Calu3 (cell line): ENCODE measurements at regions of chr1 and their contacts with region 1.

Region 1: GRCh38 chr1:172449585-172450534 is 6.0 kb upstream of the PIGC start:
- DNase-seq: peak; percentile 75
- H3K4me3 Mint-ChIP-seq: peak overlapping the region; percentile 51
- H3K27ac Mint-ChIP-seq: peak overlapping the region; percentile 63
- H3K4me1 Mint-ChIP-seq: peaks cover 72% of the 10 kb centered on the region
- H3K27me3 Mint-ChIP-seq: no peaks in the 10 kb centered on the region
- CTCF ChIP-seq: peak; percentile 93

Region 2: GRCh38 chr1:172476218-172476811 is 26.5 kb after region 1 on chr1:
- CTCF ChIA-PET with region 1: interaction called, 3 read pairs
- intact Hi-C with region 1: loop called (anchors 1 kb)
- DNase-seq: peak; percentile 71
- H3K4me3 Mint-ChIP-seq: no peak overlapping the region
- H3K27ac Mint-ChIP-seq: peak overlapping the region; percentile 59
- H3K4me1 Mint-ChIP-seq: peaks cover 76% of the 10 kb centered on the region
- H3K27me3 Mint-ChIP-seq: no peaks in the 10 kb centered on the region
- CTCF ChIP-seq: no peak

Region 3: DNA sequence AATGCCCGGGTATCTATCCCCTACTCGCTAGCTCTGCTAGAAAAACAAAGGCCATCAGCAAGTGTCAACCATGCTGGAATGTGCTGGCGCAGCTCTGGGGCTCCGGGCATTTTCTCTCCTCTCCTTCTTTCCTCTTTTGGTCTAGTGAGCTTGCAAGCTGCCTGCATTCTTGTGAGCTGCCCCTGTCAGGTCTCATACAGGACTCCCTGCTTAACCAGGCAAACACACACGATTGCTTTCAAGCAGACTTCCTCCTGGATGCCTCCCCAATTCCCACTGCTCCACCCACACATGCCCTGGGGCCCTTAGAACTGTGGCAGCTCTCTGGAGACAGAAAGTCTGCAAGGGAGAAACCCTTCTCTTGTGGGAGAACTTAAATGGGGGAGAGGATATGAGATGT is 47.4 kb after region 1 on chr1:
- CTCF ChIA-PET with region 1: interaction called, 4 read pairs
- intact Hi-C with region 1: loop called (anchors 5 kb)
- DNase-seq: peak; percentile 38
- H3K4me3 Mint-ChIP-seq: no peak overlapping the region
- H3K27ac Mint-ChIP-seq: peak overlapping the region; percentile 11
- H3K4me1 Mint-ChIP-seq: peaks cover 45% of the 10 kb centered on the region
- H3K27me3 Mint-ChIP-seq: no peaks in the 10 kb centered on the region
- CTCF ChIP-seq: no peak

Region 4: DNA sequence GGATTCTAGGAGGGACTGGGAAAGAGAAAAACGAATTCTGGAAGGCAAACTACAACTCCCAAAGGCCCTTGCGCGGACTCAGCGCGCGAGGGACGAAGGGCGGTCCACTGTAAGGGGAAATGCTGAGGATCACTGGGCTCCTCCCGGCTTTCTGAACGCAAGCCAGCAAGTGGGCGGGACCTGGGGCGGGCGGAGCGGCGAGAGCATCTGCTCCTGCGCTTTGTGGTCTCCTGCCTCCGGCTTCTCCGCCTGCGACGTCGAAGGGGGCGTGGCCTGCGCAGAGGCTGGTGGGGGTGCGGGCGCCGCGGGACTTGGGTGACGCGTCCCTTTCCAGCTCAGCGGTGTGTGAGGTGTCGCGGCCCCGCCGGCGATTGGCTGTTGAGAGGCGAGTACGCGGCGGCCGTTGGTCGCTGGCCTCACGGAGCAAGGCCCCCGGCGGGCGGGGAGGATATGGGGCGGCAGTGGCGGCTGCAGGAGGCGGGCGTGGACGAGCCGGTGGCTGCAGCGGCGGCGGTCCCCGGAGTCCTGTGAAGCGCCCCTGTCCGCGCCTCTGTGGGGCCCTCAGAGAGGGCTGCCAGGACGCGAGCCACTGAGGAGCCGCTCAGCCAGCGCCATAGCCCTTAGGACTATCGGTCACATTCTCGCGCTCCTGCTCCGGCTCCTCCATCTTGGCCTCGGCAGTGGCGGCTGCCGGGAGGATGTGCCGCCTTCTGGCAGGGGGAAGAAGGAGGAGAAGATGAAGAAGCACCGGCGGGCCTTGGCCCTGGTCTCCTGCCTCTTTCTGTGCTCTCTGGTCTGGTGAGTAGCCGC is 83.0 kb after region 1 on chr1 and contains the start of gene SUCO:
- CTCF ChIA-PET with region 1: interaction called, 31 read pairs
- intact Hi-C with region 1: loop called (anchors 1 kb)
- DNase-seq: peak; percentile 100
- H3K4me3 Mint-ChIP-seq: peak within 1 kb of the TSS; percentile 85
- H3K27ac Mint-ChIP-seq: peak within 1 kb of the TSS; percentile 99
- H3K4me1 Mint-ChIP-seq: peaks cover 41% of the 10 kb centered on the region
- H3K27me3 Mint-ChIP-seq: no peaks in the 10 kb centered on the region
- CTCF ChIP-seq: no peak
- total RNA-seq, gene SUCO: 65.3 and 84.6 TPM in 2 replicates

Region 5: DNA sequence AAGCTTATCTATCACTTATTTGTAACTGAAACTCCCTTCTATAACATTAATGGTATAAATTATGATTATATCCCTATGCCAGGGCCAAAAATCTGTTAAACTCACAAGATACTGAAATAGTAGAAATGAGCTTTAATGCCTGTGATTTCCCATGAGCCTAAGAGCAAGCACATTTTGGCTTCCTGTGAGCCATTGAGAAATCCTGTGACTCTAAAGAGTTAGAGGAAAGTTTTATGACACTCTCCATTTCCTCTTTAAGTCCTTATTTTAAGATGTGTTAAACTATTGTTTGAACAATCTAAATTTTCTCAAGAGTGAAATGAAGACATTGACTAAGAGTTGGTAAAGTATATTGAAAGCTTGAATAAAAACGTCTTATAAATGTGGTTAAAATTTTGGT is 128.7 kb after region 1 on chr1:
- CTCF ChIA-PET with region 1: no interaction called
- intact Hi-C with region 1: no loop called
- DNase-seq: no peak
- H3K4me3 Mint-ChIP-seq: no peak overlapping the region
- H3K27ac Mint-ChIP-seq: no peak overlapping the region
- H3K4me1 Mint-ChIP-seq: peaks cover 16% of the 10 kb centered on the region
- H3K27me3 Mint-ChIP-seq: no peaks in the 10 kb centered on the region
- CTCF ChIP-seq: no peak

Region 6: DNA sequence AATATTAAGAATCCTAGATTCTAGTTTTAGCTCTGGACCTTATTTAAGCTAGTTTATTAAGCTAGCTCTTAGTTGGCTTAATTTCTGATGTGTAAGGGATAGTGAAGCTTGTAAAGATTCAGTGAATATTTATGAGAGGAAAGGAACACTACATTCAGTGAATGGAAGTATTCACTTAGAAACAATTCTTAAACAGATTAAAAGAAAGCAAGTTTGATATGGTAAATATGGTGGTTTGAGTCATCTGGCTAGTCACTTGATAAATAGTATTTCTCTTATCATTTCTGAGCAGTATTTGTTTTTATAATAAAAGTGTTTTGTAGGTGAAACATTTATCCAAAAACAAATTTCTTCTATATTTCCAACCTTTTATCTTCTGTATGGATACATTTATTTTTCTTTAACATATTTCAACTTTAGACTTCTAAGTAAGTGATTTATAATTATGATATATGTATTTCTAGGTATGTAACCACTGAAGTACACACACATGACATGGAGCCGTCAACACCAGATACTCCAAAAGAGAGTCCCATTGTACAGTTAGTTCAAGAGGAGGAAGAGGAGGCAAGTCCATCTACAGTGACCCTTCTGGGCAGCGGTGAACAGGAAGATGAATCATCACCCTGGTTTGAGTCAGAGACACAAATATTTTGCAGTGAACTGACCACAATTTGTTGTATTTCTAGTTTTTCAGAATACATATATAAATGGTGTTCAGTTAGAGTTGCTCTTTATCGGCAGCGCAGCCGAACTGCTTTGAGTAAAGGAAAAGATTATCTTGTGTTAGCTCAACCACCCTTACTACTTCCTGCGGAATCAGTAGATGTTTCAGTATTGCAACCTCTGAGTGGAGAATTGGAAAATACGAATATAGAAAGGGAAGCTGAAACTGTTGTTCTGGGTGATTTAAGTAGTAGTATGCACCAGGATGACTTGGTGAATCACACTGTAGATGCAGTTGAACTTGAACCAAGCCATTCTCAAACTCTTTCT is 138.7 kb after region 1 on chr1:
- CTCF ChIA-PET with region 1: interaction called, 4 read pairs
- intact Hi-C with region 1: loop called (anchors 2 kb)
- DNase-seq: peak; percentile 69
- H3K4me3 Mint-ChIP-seq: peak overlapping the region; percentile 60
- H3K27ac Mint-ChIP-seq: peak overlapping the region; percentile 96
- H3K4me1 Mint-ChIP-seq: peaks cover 49% of the 10 kb centered on the region
- H3K27me3 Mint-ChIP-seq: no peaks in the 10 kb centered on the region
- CTCF ChIP-seq: no peak

Region 7: DNA sequence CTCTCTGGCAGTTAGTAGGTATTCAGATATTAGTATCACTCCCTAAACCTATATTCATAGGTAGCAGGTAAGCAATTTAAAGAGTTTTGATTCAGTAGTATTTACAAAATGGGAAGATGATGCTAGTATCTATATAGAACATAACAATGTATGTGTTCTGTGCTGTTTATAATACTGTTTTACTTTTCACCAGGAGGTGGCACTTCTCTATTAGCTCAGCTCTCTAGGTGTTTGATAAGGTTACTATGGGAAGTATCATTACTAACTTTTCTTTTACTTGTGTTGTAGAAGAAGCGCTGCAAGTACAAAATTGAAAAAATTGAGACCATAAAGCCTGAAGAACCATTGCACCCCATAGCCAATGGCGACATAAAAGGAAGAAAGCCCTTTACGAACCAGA is 159.7 kb after region 1 on chr1:
- CTCF ChIA-PET with region 1: no interaction called
- intact Hi-C with region 1: loop called (anchors 5 kb)
- DNase-seq: no peak
- H3K4me3 Mint-ChIP-seq: no peak overlapping the region
- H3K27ac Mint-ChIP-seq: no peak overlapping the region
- H3K4me1 Mint-ChIP-seq: peaks cover 34% of the 10 kb centered on the region
- H3K27me3 Mint-ChIP-seq: no peaks in the 10 kb centered on the region
- CTCF ChIP-seq: peak; percentile 68

Region 8: DNA sequence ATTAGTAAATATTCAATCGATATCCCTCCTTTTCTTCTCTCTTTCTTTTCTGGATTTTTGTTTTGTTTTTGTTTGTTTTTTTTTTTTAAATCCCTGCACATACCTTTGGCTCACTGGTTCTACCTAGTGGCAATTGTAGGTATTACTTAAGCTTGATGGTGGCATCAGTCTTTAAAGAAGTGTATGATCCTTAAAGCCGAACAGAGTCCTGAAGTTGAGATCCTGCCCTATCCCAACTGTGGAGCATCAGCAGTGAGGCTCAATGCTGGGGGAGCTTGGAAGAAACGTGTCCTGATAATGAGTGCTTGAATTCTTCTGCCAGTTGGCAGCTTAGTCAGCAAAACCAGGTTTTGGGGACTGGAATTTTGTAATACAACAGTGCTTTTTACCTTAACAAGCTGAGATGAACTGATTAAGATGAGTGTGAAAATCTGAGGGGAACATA is 269.9 kb after region 1 on chr1:
- CTCF ChIA-PET with region 1: interaction called, 14 read pairs
- intact Hi-C with region 1: loop called (anchors 1 kb)
- DNase-seq: peak; percentile 35
- H3K4me3 Mint-ChIP-seq: no peak overlapping the region
- H3K27ac Mint-ChIP-seq: no peak overlapping the region
- H3K4me1 Mint-ChIP-seq: peaks cover 46% of the 10 kb centered on the region
- H3K27me3 Mint-ChIP-seq: no peaks in the 10 kb centered on the region
- CTCF ChIP-seq: peak; percentile 86